Heart left ventricle (tissue), 16 donors: ENCODE measurements at regions of chr12 and their contacts with region 1.

Region 1: DNA sequence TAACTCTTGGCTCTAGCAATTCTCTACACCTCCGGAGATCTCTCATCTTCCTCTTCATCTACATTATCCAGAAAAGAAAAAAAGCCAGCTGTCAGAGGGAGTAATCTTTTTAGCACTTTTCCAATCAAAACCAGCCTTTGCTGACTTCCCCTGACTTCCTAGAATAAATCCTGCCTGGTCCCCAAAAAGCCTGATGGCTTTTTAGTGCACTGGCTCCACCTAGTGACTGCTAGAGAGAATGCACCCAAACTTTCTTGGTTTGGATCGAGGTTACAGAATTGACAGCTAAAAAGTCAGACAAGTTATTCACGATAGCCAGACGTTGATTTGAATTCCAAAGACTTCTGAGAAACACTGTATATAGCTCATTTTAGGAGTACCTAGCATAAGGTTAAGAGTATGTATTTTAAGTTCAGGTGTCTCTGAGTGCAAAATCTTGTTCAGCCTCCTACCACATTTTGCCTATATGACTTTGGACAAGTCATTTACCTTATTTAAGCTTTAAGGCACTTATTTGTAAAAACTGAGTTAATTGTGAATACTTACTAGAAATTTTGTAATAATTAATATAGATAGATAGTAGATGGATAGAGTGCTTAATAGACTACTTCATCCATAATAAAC is 185.7 kb upstream of the GRIN2B start:
- DNase-seq: peak in 3 of 5 donors; percentile 21 to 25 (median 23)
- ATAC-seq: peak in 1 of 4 donors; percentile 49
- H3K4me3 ChIP-seq: no peak overlapping the region
- H3K27ac ChIP-seq: no peak overlapping the region
- H3K4me1 ChIP-seq: no peaks in the 10 kb centered on the region
- H3K27me3 ChIP-seq: peaks cover 0 to 4% (median 0%) of the 10 kb centered on the region in 9 donors
- CTCF ChIP-seq: peak; percentile 89 to 98 (median 94)
- POLR2A ChIP-seq: no peak

Region 2: GRCh38 chr12:12916135-12916944 is 1250.8 kb before region 1 on chr12:
- intact Hi-C with region 1: loop called in 1 of 10 experiments (anchors 10 kb)
- DNase-seq: peak; percentile 75 to 88 (median 84)
- ATAC-seq: peak; percentile 86 to 98 (median 96)
- H3K4me3 ChIP-seq: peak overlapping the region in 4 of 12 donors; percentile 10 to 23 (median 16)
- H3K27ac ChIP-seq: peak overlapping the region in 6 of 12 donors; percentile 5 to 46 (median 34)
- H3K4me1 ChIP-seq: peaks cover 0 to 14% (median 7%) of the 10 kb centered on the region in 12 donors
- H3K27me3 ChIP-seq: no peaks in the 10 kb centered on the region
- CTCF ChIP-seq: peak; percentile 96 to 99 (median 98)
- POLR2A ChIP-seq: no peak

Region 3: DNA sequence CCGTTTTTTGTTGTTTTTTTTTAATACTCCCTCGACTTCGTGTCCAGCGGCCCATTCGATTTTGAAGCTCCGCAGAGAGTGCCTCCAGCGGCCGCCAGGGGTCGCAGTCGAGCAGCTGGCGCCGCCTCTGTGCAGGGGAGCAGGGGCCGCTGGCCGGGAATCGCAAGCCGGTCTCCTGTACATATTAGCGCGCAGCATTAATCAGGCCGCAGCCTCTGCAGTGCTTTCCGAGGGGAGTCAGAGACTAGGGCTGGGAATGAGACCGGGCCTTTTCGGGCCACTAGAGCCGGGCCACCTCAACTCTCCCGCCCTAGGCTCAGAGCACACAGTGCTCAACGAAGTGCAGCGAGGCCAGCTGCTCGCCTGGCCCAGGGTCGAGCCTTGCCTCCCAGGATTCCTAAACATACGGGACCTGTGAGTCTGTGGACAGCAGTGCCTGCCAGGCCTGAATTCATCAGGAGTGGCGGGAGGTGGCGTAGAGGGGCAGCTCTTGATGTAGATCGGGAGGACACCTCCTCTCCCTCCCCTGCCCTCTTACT is 888.8 kb before region 1 on chr12:
- intact Hi-C with region 1: loop called in 8 of 10 experiments (anchors 5 to 10 kb)
- DNase-seq: peak; percentile 57 to 87 (median 71)
- ATAC-seq: peak; percentile 91 to 98 (median 93)
- H3K4me3 ChIP-seq: peak overlapping the region in 2 of 12 donors; percentile 6 to 22
- H3K27ac ChIP-seq: no peak overlapping the region
- H3K4me1 ChIP-seq: peaks cover 0 to 10% (median 5%) of the 10 kb centered on the region in 12 donors
- H3K27me3 ChIP-seq: peaks cover 0 to 33% (median 0%) of the 10 kb centered on the region in 9 donors
- CTCF ChIP-seq: peak; percentile 97 to 99 (median 98)
- POLR2A ChIP-seq: no peak

Region 4: GRCh38 chr12:13362260-13362841 is 804.8 kb before region 1 on chr12:
- intact Hi-C with region 1: loop called in 2 of 10 experiments (anchors 5 kb)
- DNase-seq: peak; percentile 35 to 69 (median 49)
- ATAC-seq: peak in 3 of 4 donors; percentile 78 to 87 (median 80)
- H3K4me3 ChIP-seq: no peak overlapping the region
- H3K27ac ChIP-seq: no peak overlapping the region
- H3K4me1 ChIP-seq: no peaks in the 10 kb centered on the region
- H3K27me3 ChIP-seq: peaks cover 0 to 14% (median 4%) of the 10 kb centered on the region in 9 donors
- CTCF ChIP-seq: peak; percentile 59 to 80 (median 76)
- POLR2A ChIP-seq: no peak

Region 5: GRCh38 chr12:13734584-13735152 is 432.4 kb before region 1 on chr12:
- intact Hi-C with region 1: loop called in 6 of 10 experiments (anchors 2 to 10 kb)
- DNase-seq: no peak
- ATAC-seq: no peak
- H3K4me3 ChIP-seq: no peak overlapping the region
- H3K27ac ChIP-seq: no peak overlapping the region
- H3K4me1 ChIP-seq: no peaks in the 10 kb centered on the region
- H3K27me3 ChIP-seq: peaks cover 0 to 11% (median 0%) of the 10 kb centered on the region in 9 donors
- CTCF ChIP-seq: no peak
- POLR2A ChIP-seq: no peak

Region 6: GRCh38 chr12:13745111-13745685 is 421.9 kb before region 1 on chr12:
- intact Hi-C with region 1: loop called in 3 of 10 experiments (anchors 5 to 10 kb)
- DNase-seq: peak in 1 of 5 donors; percentile 24
- ATAC-seq: no peak
- H3K4me3 ChIP-seq: no peak overlapping the region
- H3K27ac ChIP-seq: no peak overlapping the region
- H3K4me1 ChIP-seq: no peaks in the 10 kb centered on the region
- H3K27me3 ChIP-seq: peaks cover 0 to 25% (median 6%) of the 10 kb centered on the region in 9 donors
- CTCF ChIP-seq: no peak
- POLR2A ChIP-seq: no peak

Region 7: DNA sequence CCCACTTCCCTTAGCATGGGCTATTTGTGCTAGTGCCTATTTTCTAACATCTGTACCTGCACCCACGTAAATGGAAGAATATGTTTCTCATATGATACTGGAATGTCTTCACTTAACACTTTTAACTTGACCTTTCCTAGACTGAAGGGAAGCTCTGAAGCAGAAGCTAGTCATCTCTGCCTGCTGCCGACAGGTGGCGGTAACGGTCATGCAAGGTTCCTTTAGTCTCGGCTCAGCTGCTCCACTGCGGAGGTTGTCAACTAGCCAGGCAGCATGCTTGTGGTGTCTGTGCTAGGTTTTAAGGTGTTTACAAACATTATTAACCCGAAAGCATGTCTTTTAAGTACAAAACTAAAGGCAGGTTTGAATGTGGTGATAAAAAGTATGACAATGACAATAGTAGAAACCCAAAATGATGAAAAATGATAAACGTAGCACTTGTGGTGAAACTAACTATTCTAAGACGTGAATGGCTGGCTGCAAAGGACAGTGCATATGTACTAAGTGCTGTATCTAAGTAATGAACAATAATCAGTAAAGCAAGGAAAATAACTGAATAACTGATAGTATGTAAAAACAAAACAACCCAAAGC is 302.9 kb before region 1 on chr12:
- intact Hi-C with region 1: loop called (anchors 1 to 5 kb)
- DNase-seq: peak; percentile 58 to 75 (median 69)
- ATAC-seq: peak in 3 of 4 donors; percentile 60 to 85 (median 68)
- H3K4me3 ChIP-seq: no peak overlapping the region
- H3K27ac ChIP-seq: no peak overlapping the region
- H3K4me1 ChIP-seq: no peaks in the 10 kb centered on the region
- H3K27me3 ChIP-seq: peaks cover 0 to 33% (median 0%) of the 10 kb centered on the region in 9 donors
- CTCF ChIP-seq: peak; percentile 78 to 94 (median 87)
- POLR2A ChIP-seq: no peak